Activated CD8-positive, alpha-beta T cell treated with anti-CD3 and anti-CD28 coated beads, Interleukin-2, amount 10 ng/mL, durations not matched to agents 7 days and 5 days (primary cell): ENCODE measurements at regions of chr2 and their contacts with region 1.

Region 1: DNA sequence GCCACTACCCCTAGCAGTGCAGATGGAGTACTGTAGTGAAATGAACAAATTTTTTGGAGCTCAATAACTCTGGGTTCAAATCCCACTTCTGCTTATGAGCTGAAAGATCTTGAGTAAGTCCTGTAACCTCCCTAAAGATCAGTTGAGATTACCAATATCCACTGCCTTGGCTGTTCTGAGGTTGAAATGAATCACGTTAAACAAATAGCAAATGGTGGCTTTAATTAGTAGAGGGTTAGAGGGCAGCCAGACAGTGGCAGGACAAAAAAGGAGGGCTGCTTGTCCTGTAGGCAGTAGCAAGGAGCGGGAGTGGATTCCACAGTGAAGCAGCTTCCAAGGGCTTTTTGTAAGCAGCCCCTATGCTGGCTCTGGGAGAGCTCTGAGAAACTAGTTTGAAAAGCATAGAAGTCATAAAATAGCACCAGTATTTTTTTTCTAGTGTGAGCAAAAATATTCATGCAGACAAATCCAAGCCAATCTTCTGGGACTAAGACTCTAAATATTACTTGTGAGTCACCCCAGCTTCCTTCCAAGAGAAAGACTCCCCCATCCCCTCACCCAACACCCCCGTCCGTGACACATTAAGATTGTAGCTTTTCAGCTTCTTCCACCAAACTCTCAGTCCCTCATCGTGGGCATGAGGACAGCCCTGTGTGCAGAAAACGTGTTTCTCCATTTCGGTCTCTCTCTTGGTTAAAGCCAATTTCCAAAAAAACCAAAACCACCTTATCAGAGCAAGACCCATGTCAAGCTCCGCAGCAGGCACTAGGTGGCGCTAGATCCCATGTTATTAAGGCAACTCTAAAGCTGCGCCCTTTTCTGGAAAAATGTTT is 123.5 kb upstream of the LGALSL start:
- DNase-seq: peak; percentile 85
- ATAC-seq: no peak
- H3K4me3 Mint-ChIP-seq: peak overlapping the region; percentile 15
- H3K27ac Mint-ChIP-seq: peak overlapping the region; percentile 55
- H3K4me1 Mint-ChIP-seq: peaks cover 58% of the 10 kb centered on the region
- H3K27me3 Mint-ChIP-seq: peaks cover 8% of the 10 kb centered on the region

Region 2: DNA sequence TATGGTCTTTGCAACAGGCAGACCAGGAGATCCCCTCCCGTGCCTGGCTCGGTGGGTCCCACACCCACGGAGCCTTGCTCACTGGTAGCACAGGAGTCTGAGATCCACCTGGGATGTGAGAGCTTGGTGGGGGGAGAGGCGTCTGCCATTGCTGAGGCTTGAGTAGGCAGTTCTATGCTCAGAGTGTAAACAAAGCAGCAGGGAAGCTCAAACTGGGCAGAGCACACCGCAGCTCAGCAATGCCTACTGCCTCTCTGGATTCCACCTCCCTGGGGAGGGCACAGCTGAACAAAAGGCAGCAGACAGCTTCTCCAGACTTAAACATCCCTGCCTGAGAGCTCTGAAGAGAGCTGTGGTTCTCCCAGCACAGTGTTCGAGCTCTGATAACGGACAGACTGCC is 403.7 kb before region 1 on chr2:
- CTCF ChIA-PET with region 1: no interaction called
- POLR2A ChIA-PET with region 1: no interaction called
- DNase-seq: no peak
- ATAC-seq: no peak
- H3K4me3 Mint-ChIP-seq: no peak overlapping the region
- H3K27ac Mint-ChIP-seq: no peak overlapping the region
- H3K4me1 Mint-ChIP-seq: no peaks in the 10 kb centered on the region
- H3K27me3 Mint-ChIP-seq: no peaks in the 10 kb centered on the region

Region 3: GRCh38 chr2:64052468-64053241 is 277.8 kb before region 1 on chr2:
- CTCF ChIA-PET with region 1: interaction called, 321 read pairs
- POLR2A ChIA-PET with region 1: interaction called, 13 read pairs
- DNase-seq: peak; percentile 35
- ATAC-seq: peak; percentile 35
- H3K4me3 Mint-ChIP-seq: no peak overlapping the region
- H3K27ac Mint-ChIP-seq: no peak overlapping the region
- H3K4me1 Mint-ChIP-seq: peaks cover 40% of the 10 kb centered on the region
- H3K27me3 Mint-ChIP-seq: no peaks in the 10 kb centered on the region

Region 4: GRCh38 chr2:64203858-64204632 is 126.5 kb before region 1 on chr2:
- CTCF ChIA-PET with region 1: interaction called, 10 read pairs
- POLR2A ChIA-PET with region 1: no interaction called
- DNase-seq: no peak
- ATAC-seq: peak; percentile 47
- H3K4me3 Mint-ChIP-seq: peak overlapping the region; percentile 50
- H3K27ac Mint-ChIP-seq: peak overlapping the region; percentile 82
- H3K4me1 Mint-ChIP-seq: peaks cover 58% of the 10 kb centered on the region
- H3K27me3 Mint-ChIP-seq: no peaks in the 10 kb centered on the region

Region 5: GRCh38 chr2:64277101-64277849 is 53.2 kb before region 1 on chr2:
- CTCF ChIA-PET with region 1: no interaction called
- POLR2A ChIA-PET with region 1: no interaction called
- DNase-seq: no peak
- ATAC-seq: no peak
- H3K4me3 Mint-ChIP-seq: no peak overlapping the region
- H3K27ac Mint-ChIP-seq: no peak overlapping the region
- H3K4me1 Mint-ChIP-seq: peaks cover 12% of the 10 kb centered on the region
- H3K27me3 Mint-ChIP-seq: no peaks in the 10 kb centered on the region

Region 6: DNA sequence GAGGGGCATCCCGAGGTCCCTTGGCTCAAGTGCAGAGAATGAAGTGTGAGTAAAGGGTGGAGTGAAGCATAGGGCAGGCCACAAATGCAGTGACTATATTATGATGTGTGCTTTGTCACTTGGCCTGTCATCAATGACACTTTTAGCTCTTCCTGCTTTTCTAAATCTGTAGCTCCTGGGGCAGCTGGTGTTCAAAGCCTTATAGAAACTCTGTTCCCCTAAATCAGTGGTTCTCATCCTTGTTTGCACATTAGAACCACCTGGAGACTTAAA is 12.1 kb before region 1 on chr2:
- CTCF ChIA-PET with region 1: interaction called, 16 read pairs
- POLR2A ChIA-PET with region 1: interaction called, 3 read pairs
- DNase-seq: no peak
- ATAC-seq: no peak
- H3K4me3 Mint-ChIP-seq: no peak overlapping the region
- H3K27ac Mint-ChIP-seq: no peak overlapping the region
- H3K4me1 Mint-ChIP-seq: peaks cover 6% of the 10 kb centered on the region
- H3K27me3 Mint-ChIP-seq: peaks cover 22% of the 10 kb centered on the region

Region 7: DNA sequence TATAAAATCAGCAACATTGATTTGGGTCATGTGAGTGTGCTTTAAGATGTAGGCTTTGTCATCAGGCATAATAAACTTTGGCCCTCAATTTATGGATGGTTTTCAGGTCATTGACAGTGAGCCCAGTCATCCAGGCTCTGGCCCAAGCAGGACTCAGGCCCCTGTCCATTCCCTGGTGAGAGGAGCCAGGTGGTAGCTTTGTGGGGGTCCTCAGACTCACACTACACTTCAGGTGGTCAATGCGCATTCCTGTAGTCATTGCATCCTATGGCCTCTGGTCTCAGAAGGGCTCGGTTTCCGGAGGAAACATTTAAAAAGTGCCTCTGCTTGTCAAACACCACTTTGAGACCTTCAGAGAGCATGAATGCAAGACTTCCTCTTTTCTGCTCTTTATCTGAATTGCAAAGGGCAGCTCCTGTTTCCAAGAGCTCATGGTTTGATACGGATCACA is 143.6 kb after region 1 on chr2:
- CTCF ChIA-PET with region 1: interaction called, 32 read pairs
- POLR2A ChIA-PET with region 1: interaction called, 4 read pairs
- DNase-seq: no peak
- ATAC-seq: no peak
- H3K4me3 Mint-ChIP-seq: no peak overlapping the region
- H3K27ac Mint-ChIP-seq: no peak overlapping the region
- H3K4me1 Mint-ChIP-seq: peaks cover 25% of the 10 kb centered on the region
- H3K27me3 Mint-ChIP-seq: peaks cover 7% of the 10 kb centered on the region

Region 8: GRCh38 chr2:64562148-64562784 is 231.8 kb after region 1 on chr2:
- CTCF ChIA-PET with region 1: interaction called, 103 read pairs
- POLR2A ChIA-PET with region 1: no interaction called
- DNase-seq: no peak
- ATAC-seq: peak; percentile 61
- H3K4me3 Mint-ChIP-seq: no peak overlapping the region
- H3K27ac Mint-ChIP-seq: peak overlapping the region; percentile 62
- H3K4me1 Mint-ChIP-seq: peaks cover 34% of the 10 kb centered on the region
- H3K27me3 Mint-ChIP-seq: no peaks in the 10 kb centered on the region

Region 9: GRCh38 chr2:64865073-64865830 is 534.8 kb after region 1 on chr2:
- CTCF ChIA-PET with region 1: interaction called, 11 read pairs
- POLR2A ChIA-PET with region 1: no interaction called
- DNase-seq: peak; percentile 69
- ATAC-seq: peak; percentile 94
- H3K4me3 Mint-ChIP-seq: peak overlapping the region; percentile 67
- H3K27ac Mint-ChIP-seq: no peak overlapping the region
- H3K4me1 Mint-ChIP-seq: no peaks in the 10 kb centered on the region
- H3K27me3 Mint-ChIP-seq: peaks cover 2% of the 10 kb centered on the region